ENCODE measurements at regions of chr18 and their contacts with region 1.

Region 1: DNA sequence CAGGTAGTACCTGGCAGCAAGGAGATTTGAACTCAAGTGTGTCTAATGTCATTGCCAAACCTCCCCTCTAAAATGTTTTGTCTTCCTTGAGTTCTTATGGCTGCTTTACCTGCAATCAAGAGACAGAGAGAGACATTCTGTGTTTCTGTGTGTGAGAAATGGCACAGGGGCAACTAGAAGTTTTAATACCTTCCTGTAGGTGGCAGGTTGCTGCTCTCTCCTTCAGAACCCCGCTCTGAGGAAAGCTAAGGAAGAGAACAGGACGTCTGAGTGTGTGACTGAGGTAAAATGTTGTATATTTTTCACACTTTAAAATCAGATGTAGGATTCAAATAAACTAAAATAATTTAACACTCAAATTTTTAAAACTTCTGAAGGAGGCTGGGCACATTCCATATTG is 19.2 kb downstream of the DTNA start:
- DNase-seq: peak in 1 of 2 experiments; percentile 37
- H3K4me3 ChIP-seq: no peak overlapping the region
- H3K4me3 Mint-ChIP-seq: no peak overlapping the region
- H3K27ac Mint-ChIP-seq: no peak overlapping the region
- H3K4me1 ChIP-seq: peaks cover 15% of the 10 kb centered on the region
- H3K4me1 Mint-ChIP-seq: peaks cover 10% of the 10 kb centered on the region
- H3K27me3 ChIP-seq: no peaks in the 10 kb centered on the region
- H3K27me3 Mint-ChIP-seq: no peaks in the 10 kb centered on the region
- CTCF ChIP-seq: peak; percentile 14 to 44

Region 2: DNA sequence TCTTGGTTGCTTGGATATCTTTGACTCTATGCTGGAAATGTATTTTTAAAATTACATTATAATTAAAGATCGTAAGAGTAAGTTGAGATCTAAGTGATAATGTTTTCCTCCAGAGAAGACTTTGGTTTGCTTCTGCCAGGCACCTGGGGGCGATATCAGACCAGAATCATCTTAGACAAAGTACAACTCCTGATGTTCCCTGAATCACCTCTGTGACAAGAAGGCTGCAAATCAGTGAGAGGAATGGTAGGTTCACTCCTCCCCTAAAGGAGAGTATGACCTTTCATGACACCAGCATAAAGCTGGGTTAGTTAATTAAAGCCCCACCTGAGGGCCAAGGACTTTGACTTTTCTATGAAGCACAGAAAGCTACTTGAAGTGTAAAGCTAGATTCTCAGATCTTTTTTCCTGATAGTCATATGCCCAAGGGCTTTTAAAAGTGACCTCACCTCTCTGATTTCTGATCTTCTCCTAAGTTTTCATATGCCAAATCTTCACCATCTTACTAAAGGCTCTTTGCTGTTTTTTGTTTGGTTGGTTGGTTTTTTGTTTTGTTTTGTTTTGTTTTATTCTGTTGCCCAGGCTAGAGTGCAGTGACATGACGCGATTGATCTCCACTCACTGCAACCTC is 133.5 kb before region 1 on chr18:
- CTCF ChIA-PET with region 1: no interaction called
- POLR2A ChIA-PET with region 1: no interaction called
- intact Hi-C with region 1: loop called (anchors 5 kb)
- DNase-seq: peak in 1 of 2 experiments; percentile 36
- H3K4me3 ChIP-seq: no peak overlapping the region
- H3K4me3 Mint-ChIP-seq: no peak overlapping the region
- H3K27ac Mint-ChIP-seq: no peak overlapping the region
- H3K4me1 ChIP-seq: no peaks in the 10 kb centered on the region
- H3K4me1 Mint-ChIP-seq: no peaks in the 10 kb centered on the region
- H3K27me3 ChIP-seq: no peaks in the 10 kb centered on the region
- H3K27me3 Mint-ChIP-seq: no peaks in the 10 kb centered on the region
- CTCF ChIP-seq: peak in 1 of 2 experiments; percentile 31

Region 3: DNA sequence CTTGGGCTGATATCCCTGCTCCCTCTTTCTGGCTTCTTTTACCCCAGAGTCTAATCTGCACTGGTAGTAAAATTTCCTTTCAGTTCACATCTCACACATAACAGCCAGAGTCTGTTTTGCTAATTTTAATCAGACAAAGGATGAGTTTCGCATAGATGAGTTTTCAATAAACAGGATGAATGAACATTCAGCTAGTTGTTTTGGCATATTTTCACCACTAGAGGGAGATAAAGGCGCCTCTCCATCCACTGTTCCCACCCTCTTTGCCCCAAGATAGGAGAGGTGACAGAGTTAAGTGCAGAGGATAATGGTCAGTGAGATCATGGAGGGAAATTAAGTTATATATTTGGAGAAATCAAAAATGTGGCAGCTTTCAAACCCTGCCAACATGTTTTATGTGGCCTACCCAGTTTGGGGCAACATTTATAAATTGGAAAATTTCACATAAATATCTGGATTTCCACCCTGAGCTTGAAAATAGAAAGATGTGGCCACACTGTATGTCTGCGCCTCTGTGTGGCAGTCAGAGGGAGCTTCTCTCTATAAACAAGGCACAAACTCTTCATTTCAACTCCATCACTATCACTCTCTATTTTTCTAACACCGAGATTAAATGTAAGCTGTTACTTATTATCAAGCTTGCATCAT is 67.7 kb before region 1 on chr18:
- CTCF ChIA-PET with region 1: interaction called, 4 read pairs
- POLR2A ChIA-PET with region 1: no interaction called
- intact Hi-C with region 1: loop called (anchors 1 kb)
- DNase-seq: peak in 1 of 2 experiments; percentile 30
- H3K4me3 ChIP-seq: no peak overlapping the region
- H3K4me3 Mint-ChIP-seq: no peak overlapping the region
- H3K27ac Mint-ChIP-seq: no peak overlapping the region
- H3K4me1 ChIP-seq: no peaks in the 10 kb centered on the region
- H3K4me1 Mint-ChIP-seq: peaks cover 6% of the 10 kb centered on the region
- H3K27me3 ChIP-seq: no peaks in the 10 kb centered on the region
- H3K27me3 Mint-ChIP-seq: no peaks in the 10 kb centered on the region
- CTCF ChIP-seq: peak; percentile 46 to 60

Region 4: GRCh38 chr18:34767601-34768027 is 38.4 kb after region 1 on chr18:
- CTCF ChIA-PET with region 1: no interaction called
- POLR2A ChIA-PET with region 1: no interaction called
- intact Hi-C with region 1: no loop called
- DNase-seq: no peak
- H3K4me3 ChIP-seq: no peak overlapping the region
- H3K4me3 Mint-ChIP-seq: no peak overlapping the region
- H3K27ac Mint-ChIP-seq: no peak overlapping the region
- H3K4me1 ChIP-seq: no peaks in the 10 kb centered on the region
- H3K4me1 Mint-ChIP-seq: no peaks in the 10 kb centered on the region
- H3K27me3 ChIP-seq: no peaks in the 10 kb centered on the region
- H3K27me3 Mint-ChIP-seq: no peaks in the 10 kb centered on the region
- CTCF ChIP-seq: no peak